ENCODE measurements at regions of chr18 and their contacts with region 1.

Region 1: DNA sequence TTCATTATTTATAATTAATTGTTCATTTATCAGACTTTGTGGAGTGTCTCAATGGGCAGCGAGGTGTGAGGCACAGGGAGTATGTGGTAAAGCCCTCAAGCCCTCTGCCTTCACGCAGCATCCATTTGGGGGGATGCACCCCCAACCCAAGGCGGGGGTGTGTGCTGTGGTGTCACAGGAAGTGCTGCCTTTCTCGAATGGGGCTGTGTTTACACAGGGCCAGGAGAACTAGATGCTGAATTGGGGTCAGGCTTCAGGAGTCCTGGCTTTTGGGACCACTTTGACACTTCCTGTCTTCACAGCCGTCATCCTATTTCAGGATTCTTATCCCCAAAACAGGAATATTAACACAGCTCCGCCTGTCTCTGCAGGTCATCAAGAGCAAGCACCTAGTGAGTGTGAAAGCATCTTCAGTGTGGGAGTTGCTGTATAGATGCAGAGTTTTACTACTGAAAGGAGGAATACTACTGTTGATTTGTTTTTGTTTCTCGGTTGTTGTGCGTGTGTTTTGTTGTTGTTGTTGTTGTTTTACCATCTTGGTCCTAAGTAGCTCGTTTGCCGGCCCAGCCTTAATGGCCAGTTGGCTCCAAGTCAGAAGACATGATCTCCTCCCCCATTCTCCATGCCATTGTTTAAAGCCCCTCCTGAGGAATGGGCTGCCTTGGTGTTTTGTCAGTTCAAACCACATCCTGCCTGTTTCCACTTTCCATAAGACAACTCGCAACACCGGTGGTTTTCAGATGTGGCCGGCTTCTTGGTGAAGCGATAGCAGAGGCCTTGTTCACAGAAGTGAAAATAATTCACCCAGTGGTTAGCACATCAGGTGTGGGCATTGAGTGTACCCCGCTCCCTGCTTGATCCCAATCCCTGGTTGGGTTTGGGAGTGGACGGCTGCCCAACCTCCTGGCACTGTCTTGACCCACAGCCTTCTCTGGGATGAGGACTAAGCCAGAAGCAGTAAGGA is 221.3 kb downstream of the BCL2 start:
- DNase-seq: no peak

Region 2: DNA sequence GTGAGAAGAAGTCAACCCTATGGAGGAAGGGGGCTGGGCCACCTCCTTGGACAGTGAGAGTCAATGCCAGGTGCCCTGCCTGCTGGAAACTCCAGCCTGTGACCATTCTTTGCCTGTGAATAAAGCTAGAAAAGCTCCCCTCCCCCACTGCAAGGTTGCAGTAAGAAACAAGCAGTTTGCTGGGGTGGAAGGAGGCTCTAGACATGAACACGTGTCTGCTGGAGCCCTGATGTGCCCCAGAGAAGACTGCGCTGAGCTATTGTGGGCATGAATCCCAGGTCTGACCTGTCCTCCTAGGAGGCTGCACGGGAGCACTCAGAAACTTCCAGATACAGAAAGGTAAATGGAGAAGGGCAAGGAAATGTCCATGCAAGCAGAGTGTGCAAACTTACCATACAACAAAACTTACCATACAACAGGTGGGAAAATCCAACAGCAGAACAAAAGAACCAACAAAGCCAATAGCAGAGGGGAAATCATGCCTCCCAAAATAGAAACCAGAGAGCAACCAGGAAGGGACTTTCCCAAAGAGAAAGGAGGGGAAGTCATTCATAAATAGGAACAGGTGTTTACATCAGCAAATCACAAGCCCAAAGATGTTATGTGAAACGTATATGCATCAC is 57.4 kb before region 1 on chr18:
- intact Hi-C with region 1: loop called (anchors 5 kb)
- DNase-seq: no peak

Measured in cardiac septum (tissue), 1 donor.